Naive thymus-derived CD8-positive, alpha-beta T cell (primary cell): ENCODE measurements at regions of chr3 and their contacts with region 1.

Region 1: DNA sequence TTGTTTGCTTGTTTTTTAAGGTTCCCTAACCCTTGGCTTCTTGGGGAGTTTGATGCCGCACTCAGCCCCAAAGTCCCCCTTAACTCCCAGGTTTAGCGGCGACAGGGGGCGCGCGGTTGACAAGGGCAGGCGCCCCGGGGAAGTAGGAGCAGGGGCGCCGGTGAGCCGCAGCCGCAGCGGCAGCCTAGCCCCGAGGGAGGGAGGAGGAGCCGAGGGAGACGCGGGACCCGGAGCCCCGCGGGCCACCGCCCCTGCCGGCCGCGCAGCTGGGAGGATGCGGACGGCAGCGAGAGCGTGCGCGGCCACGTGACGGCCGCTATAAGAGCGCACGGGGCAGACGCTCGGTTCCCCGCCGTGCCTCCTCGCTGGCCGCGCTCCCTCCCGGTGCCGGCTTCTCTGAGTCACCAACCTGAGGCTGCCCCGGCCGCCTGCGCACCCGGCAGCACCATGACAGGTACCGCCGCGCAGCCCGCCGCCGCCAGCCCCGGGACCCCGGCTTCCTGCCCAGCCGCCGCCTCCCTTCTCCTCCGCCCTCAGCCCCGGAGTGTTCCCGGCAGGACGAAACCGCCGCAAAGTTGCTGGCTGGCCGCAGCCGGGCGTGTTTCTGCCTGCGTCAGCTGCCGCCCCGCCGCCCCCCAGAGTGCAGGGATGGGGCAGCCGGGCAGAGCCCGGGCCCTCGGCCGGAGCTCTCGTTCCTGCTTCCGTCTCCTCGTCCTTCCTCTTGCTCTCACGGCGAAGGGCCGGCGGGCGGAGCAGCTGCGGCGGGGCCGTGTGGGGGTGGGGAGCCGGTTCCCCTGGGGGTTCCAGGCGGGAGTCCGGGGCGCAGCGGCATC is at the start of gene GYG1:
- DNase-seq: peak; percentile 64 to 85 (median 76)
- ATAC-seq: peak; percentile 83 to 87
- H3K4me3 Mint-ChIP-seq: peak within 1 kb of the TSS; percentile 73 to 90 (median 84)
- H3K27ac Mint-ChIP-seq: peak within 1 kb of the TSS; percentile 58 to 89 (median 86)
- H3K4me1 Mint-ChIP-seq: peaks cover 0 to 32% (median 28%) of the 10 kb centered on the region in 4 donors
- H3K27me3 Mint-ChIP-seq: no peaks in the 10 kb centered on the region
- polyA plus RNA-seq, gene GYG1: 23.4 to 28.0 (median 25.1) TPM

Region 2: DNA sequence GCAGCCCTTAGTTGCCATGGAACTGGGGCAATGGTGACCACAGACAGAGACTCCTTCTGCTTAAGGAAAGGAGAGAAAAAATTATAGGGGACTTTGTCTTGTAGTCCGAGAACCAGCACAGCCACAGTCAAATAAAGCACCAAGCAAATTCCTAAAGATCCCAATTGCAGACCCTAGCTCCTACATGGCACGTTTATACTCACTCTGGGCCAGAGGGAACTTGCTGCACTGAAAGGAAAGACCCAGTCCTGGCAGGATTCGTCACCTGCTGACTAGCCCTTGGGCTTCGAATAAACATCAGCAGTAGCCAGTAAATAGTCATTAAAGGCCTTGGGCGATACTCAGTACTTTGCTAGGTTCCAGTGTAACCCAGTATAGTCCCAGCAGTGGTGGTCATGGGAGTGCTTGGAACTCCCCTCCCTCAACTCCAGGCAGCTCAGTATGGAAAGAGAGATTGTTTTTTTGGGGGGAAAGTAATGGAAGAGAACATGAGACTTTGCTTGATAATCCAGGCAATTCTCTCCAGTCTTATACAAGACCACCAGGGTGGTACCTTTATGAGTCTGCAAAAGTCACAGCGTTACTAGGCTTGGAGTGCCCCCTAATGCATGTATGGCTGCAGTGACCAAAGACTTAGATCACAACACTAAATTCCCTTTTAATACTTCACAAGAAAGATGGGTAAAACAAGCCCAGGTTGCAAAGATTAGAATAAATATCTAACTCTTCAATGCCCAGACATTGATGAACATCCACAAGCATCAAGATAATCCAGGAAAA is 360.1 kb before region 1 on chr3:
- POLR2A ChIA-PET with region 1: no interaction called
- DNase-seq: no peak
- ATAC-seq: no peak
- H3K4me3 Mint-ChIP-seq: no peak overlapping the region
- H3K27ac Mint-ChIP-seq: no peak overlapping the region
- H3K4me1 Mint-ChIP-seq: no peaks in the 10 kb centered on the region
- H3K27me3 Mint-ChIP-seq: no peaks in the 10 kb centered on the region

Region 3: DNA sequence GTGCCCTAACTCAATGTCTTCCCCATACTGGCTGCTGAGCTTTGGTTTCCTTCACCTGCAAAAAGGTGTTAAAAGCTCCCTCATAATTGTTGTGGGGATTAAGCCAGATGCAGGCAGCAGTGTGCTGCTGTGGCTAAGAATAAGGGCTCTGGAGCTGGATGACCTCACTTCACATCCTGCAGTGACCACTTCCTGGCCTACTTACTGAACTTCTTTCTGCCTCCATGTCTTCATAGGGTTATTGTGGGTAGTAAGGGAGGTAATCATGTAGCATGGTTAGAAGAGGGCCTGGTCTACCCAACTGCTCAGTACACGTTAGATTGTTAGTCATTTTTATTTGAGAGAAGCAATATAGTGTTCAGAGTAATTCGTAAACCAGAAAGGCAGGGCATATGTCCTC is 18.3 kb after region 1 on chr3:
- POLR2A ChIA-PET with region 1: interaction called, 11 read pairs
- DNase-seq: peak in 4 of 10 donors; percentile 10 to 47 (median 14)
- ATAC-seq: peak; percentile 42 to 68
- H3K4me3 Mint-ChIP-seq: peak overlapping the region in 1 of 10 donors; percentile 40
- H3K27ac Mint-ChIP-seq: peak overlapping the region in 3 of 10 donors; percentile 22 to 89 (median 71)
- H3K4me1 Mint-ChIP-seq: peaks cover 5 to 19% (median 13%) of the 10 kb centered on the region in 4 donors
- H3K27me3 Mint-ChIP-seq: no peaks in the 10 kb centered on the region

Region 4: DNA sequence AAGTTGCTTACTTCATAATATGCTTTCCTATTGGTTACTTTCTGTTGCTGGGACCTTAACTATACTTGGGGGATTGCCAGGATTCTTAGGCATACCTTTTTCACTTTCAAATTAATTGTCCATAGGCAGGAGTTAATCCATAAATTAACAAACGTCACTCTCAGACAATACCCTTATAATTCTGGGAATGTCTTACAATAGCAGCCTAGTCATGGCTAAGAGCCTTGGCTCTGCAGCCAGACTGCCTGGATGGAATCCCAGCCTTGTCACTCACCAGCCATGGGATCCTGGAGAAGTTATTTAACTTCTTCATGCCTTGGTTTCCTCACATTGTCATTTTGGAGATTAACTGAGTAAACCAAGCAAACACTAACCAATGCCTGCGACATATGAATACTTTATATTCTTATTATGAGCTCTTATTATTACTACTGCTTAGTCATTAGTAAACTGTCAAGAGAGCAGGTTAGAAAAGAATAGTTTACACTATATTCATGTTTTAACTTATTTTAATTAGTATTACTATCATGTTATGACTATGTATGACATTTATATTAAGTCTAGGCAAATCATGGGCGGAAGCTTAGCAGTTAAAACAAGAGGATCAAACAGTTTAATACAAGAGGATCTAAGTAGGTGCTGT is 28.9 kb after region 1 on chr3:
- POLR2A ChIA-PET with region 1: no interaction called
- DNase-seq: no peak
- ATAC-seq: no peak
- H3K4me3 Mint-ChIP-seq: no peak overlapping the region
- H3K27ac Mint-ChIP-seq: peak overlapping the region in 2 of 10 donors; percentile 2 to 10
- H3K4me1 Mint-ChIP-seq: peaks cover 6 to 14% (median 11%) of the 10 kb centered on the region in 4 donors
- H3K27me3 Mint-ChIP-seq: no peaks in the 10 kb centered on the region

Region 5: GRCh38 chr3:149058602-149059001 is 67.2 kb after region 1 on chr3:
- POLR2A ChIA-PET with region 1: no interaction called
- DNase-seq: no peak
- ATAC-seq: no peak
- H3K4me3 Mint-ChIP-seq: no peak overlapping the region
- H3K27ac Mint-ChIP-seq: peak overlapping the region in 1 of 10 donors; percentile 51
- H3K4me1 Mint-ChIP-seq: no peaks in the 10 kb centered on the region
- H3K27me3 Mint-ChIP-seq: no peaks in the 10 kb centered on the region